ENCODE measurements at regions of chr3 and their contacts with region 1.

Region 1: DNA sequence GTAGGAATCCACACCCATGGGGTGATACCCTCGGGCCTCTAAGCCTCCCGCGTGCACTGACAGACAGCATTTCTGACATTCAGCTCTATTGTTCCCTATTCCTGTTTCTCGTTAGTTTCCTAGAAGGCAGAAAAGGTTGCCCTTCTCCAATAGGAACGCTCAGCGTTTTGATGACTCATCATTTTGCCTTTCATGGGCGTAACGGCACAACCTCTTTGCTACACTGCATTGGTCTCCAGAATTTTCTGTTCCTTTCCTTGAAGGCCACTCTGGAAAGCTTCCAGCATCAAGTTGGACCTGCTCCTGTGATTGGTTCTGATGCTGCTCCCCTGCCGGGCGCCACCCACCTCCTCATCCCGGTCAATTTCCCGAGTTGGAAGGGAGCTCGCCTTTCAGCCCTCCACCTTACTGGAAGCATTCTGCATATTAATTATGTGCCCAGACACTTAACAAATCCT is 13.0 kb upstream of the TNK2 start:
- DNase-seq: no peak
- H3K4me3 ChIP-seq: no peak overlapping the region
- H3K27ac ChIP-seq: no peak overlapping the region
- H3K27me3 ChIP-seq: peaks cover 7% of the 10 kb centered on the region
- CTCF ChIP-seq: no peak

Region 2: DNA sequence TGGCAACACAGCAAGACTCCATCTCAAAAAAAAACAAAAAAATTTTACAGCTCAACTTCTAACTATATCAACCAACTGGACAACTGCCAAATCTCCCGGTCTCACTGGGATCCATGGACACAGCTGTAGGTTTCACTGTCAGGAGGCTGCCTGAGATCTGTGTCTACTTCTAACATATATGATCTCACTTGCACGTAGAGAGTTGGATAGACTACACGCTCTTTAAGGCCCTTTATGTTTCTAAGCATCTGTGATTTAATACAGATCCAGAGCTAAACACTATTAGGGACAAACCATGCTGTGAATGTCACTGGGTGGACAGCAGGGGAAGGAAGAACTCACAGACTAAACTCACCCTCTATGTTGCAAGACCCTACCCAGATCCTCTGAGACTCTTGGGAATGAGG is 324.6 kb before region 1 on chr3:
- CTCF ChIA-PET with region 1: no interaction called
- POLR2A ChIA-PET with region 1: no interaction called
- DNase-seq: no peak
- H3K4me3 ChIP-seq: no peak overlapping the region
- H3K27ac ChIP-seq: no peak overlapping the region
- H3K27me3 ChIP-seq: peaks cover 11% of the 10 kb centered on the region
- CTCF ChIP-seq: no peak

Region 3: GRCh38 chr3:195909644-195910508 is 11.5 kb before region 1 on chr3:
- CTCF ChIA-PET with region 1: interaction called, 15 read pairs
- POLR2A ChIA-PET with region 1: no interaction called
- DNase-seq: no peak
- H3K4me3 ChIP-seq: peak overlapping the region; percentile 59
- H3K27ac ChIP-seq: peak overlapping the region; percentile 11
- H3K27me3 ChIP-seq: no peaks in the 10 kb centered on the region
- CTCF ChIP-seq: no peak